ENCODE measurements at regions of chr14 and their contacts with region 1.

Region 1: GRCh38 chr14:50773632-50774541 is 57.1 kb downstream of the NIN start:
- DNase-seq: peak; percentile 76
- H3K4me3 ChIP-seq: no peak overlapping the region
- H3K27ac ChIP-seq: peak overlapping the region in 1 of 2 experiments; percentile 73; a peak in 1 of 4 replicates
- H3K4me1 ChIP-seq: peaks cover 5 to 21% of the 10 kb centered on the region in 2 experiments; a peak in 3 of 4 replicates
- H3K27me3 ChIP-seq: no peaks in the 10 kb centered on the region
- CTCF ChIP-seq: peak; percentile 90
- EP300 ChIP-seq: no peak
- RAD21 ChIP-seq: peak; percentile 86

Region 2: GRCh38 chr14:49930720-49931119 is 843.2 kb before region 1 on chr14:
- CTCF ChIA-PET with region 1: no interaction called
- POLR2A ChIA-PET with region 1: no interaction called
- DNase-seq: no peak
- H3K4me3 ChIP-seq: no peak overlapping the region
- H3K27ac ChIP-seq: no peak overlapping the region
- H3K4me1 ChIP-seq: no peaks in the 10 kb centered on the region
- H3K27me3 ChIP-seq: no peaks in the 10 kb centered on the region
- CTCF ChIP-seq: no peak
- EP300 ChIP-seq: no peak
- RAD21 ChIP-seq: no peak

Region 3: DNA sequence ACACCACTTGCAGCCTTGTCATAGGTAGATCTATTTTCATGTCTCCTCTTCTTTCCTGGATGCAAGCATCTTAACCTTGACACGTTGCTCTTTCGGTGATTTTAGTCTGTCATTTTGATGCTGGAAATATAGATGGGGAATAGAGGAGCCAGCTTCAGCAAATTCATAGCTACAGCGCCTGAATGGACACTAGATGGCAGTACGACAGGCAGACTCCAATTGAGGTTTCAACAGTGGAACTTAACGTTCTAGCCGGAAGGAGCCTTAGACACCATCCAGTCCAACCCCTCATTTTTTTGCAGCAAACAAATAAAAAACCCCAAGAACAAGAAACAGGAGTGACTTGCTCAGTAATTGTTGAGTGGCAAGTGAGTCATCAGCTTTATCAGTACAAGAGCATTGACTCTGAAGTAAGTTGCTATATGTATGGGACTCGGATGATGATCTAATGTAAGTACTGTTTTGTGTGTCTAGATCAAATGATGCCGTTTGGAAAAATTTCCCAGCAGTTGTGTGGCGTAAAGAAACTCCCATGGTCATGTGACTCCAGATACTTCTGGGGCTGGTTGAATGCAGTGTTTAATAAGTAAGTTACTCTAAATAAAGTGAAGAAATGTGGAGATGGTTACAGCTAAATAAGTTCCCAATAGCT is 452.8 kb before region 1 on chr14:
- CTCF ChIA-PET with region 1: interaction called, 11 read pairs
- POLR2A ChIA-PET with region 1: no interaction called
- DNase-seq: peak; percentile 72
- H3K4me3 ChIP-seq: peak overlapping the region; percentile 38 to 47
- H3K27ac ChIP-seq: peak overlapping the region; percentile 83 to 95
- H3K4me1 ChIP-seq: peaks cover 0 to 4% of the 10 kb centered on the region in 2 experiments; a peak in 3 of 4 replicates
- H3K27me3 ChIP-seq: no peaks in the 10 kb centered on the region
- CTCF ChIP-seq: peak; percentile 96
- EP300 ChIP-seq: no peak
- RAD21 ChIP-seq: peak; percentile 80

Region 4: GRCh38 chr14:50599700-50600444 is 174.0 kb before region 1 on chr14:
- CTCF ChIA-PET with region 1: interaction called, 23 read pairs
- POLR2A ChIA-PET with region 1: no interaction called
- DNase-seq: peak; percentile 13
- H3K4me3 ChIP-seq: no peak overlapping the region
- H3K27ac ChIP-seq: peak overlapping the region in 1 of 2 experiments; percentile 11; a peak in 2 of 4 replicates
- H3K4me1 ChIP-seq: peaks cover 4 to 15% of the 10 kb centered on the region in 2 experiments; a peak in 3 of 4 replicates
- H3K27me3 ChIP-seq: no peaks in the 10 kb centered on the region
- CTCF ChIP-seq: peak; percentile 73
- EP300 ChIP-seq: no peak
- RAD21 ChIP-seq: peak; percentile 74

Region 5: GRCh38 chr14:50619556-50620141 is 154.2 kb before region 1 on chr14:
- CTCF ChIA-PET with region 1: interaction called, 50 read pairs
- POLR2A ChIA-PET with region 1: no interaction called
- DNase-seq: peak; percentile 27
- H3K4me3 ChIP-seq: no peak overlapping the region
- H3K27ac ChIP-seq: peak overlapping the region in 1 of 2 experiments; percentile 3; a peak in 1 of 4 replicates
- H3K4me1 ChIP-seq: peaks cover 0 to 11% of the 10 kb centered on the region in 2 experiments; a peak in 1 of 4 replicates
- H3K27me3 ChIP-seq: no peaks in the 10 kb centered on the region
- CTCF ChIP-seq: peak; percentile 73
- EP300 ChIP-seq: no peak
- RAD21 ChIP-seq: peak; percentile 69

Region 6: DNA sequence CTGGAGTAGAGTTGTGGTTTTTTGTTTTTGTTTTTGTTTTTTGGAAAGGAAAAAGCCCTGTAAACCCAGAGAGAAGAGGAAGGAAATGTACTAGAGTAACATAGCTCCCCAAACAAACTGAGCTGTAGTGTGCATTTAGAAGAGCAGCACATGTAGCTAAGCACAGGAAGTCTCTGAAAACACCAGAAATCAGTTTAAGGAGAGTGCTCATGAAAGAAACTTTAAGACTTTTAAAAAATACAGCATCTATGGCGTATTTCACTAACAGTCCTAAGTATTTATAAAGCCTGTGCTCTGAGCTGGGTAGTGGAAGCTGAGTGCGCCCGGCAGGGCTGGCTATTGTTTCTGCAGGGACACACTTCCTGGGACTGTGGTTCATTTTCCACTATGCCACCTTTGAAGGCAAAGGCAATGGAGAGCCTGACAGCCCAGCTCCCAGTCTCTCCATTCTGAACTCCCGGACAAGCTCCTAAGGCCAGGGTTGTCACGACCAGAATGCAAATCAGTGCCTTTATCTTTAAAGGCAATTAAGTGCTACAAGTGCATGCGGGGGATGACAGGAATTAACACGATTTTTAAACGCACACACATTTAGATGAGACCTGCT is 11.7 kb after region 1 on chr14:
- CTCF ChIA-PET with region 1: interaction called, 143 read pairs
- POLR2A ChIA-PET with region 1: no interaction called
- DNase-seq: no peak
- H3K4me3 ChIP-seq: no peak overlapping the region
- H3K27ac ChIP-seq: peak overlapping the region in 1 of 2 experiments; percentile 47; a peak in 2 of 4 replicates
- H3K4me1 ChIP-seq: peaks cover 10 to 21% of the 10 kb centered on the region in 2 experiments; a peak in 2 of 4 replicates
- H3K27me3 ChIP-seq: no peaks in the 10 kb centered on the region
- CTCF ChIP-seq: no peak
- EP300 ChIP-seq: no peak
- RAD21 ChIP-seq: no peak

Region 7: GRCh38 chr14:50964595-50965390 is 190.9 kb after region 1 on chr14:
- CTCF ChIA-PET with region 1: no interaction called
- POLR2A ChIA-PET with region 1: no interaction called
- DNase-seq: no peak
- H3K4me3 ChIP-seq: no peak overlapping the region; a peak in 1 of 4 replicates
- H3K27ac ChIP-seq: peak overlapping the region; percentile 61 to 80; a peak in 3 of 4 replicates
- H3K4me1 ChIP-seq: peaks cover 12 to 44% of the 10 kb centered on the region in 2 experiments
- H3K27me3 ChIP-seq: no peaks in the 10 kb centered on the region
- CTCF ChIP-seq: no peak
- EP300 ChIP-seq: no peak
- RAD21 ChIP-seq: no peak

Region 8: GRCh38 chr14:51014086-51014485 is 240.2 kb after region 1 on chr14:
- CTCF ChIA-PET with region 1: no interaction called
- POLR2A ChIA-PET with region 1: no interaction called
- DNase-seq: no peak
- H3K4me3 ChIP-seq: no peak overlapping the region
- H3K27ac ChIP-seq: peak overlapping the region in 1 of 2 experiments; percentile 18; a peak in 2 of 4 replicates
- H3K4me1 ChIP-seq: peaks cover 4 to 12% of the 10 kb centered on the region in 2 experiments
- H3K27me3 ChIP-seq: no peaks in the 10 kb centered on the region
- CTCF ChIP-seq: no peak
- EP300 ChIP-seq: no peak
- RAD21 ChIP-seq: no peak